ENCODE measurements at regions of chr20 and their contacts with region 1.

Region 1: GRCh38 chr20:35883778-35884540 is 70.3 kb downstream of the SCAND1 start:
- DNase-seq: no peak
- ATAC-seq: peak; percentile 97
- H3K4me3 ChIP-seq: no peak overlapping the region
- H3K27ac ChIP-seq: no peak overlapping the region
- H3K4me1 ChIP-seq: no peaks in the 10 kb centered on the region
- H3K27me3 ChIP-seq: no peaks in the 10 kb centered on the region
- CTCF ChIP-seq: peak; percentile 66 to 82 (median 77)
- EP300 ChIP-seq: no peak
- POLR2A ChIP-seq: no peak
- RAD21 ChIP-seq: peak; percentile 80

Region 2: GRCh38 chr20:35690265-35690664 is 193.7 kb before region 1 on chr20:
- CTCF ChIA-PET with region 1: interaction called, 3 read pairs
- POLR2A ChIA-PET with region 1: no interaction called
- RAD21 ChIA-PET with region 1: no interaction called
- SMC1A ChIA-PET with region 1: no interaction called
- in situ Hi-C with region 1: no loop called
- intact Hi-C with region 1: loop called (anchors 2 kb)
- DNase-seq: no peak
- ATAC-seq: no peak
- H3K4me3 ChIP-seq: no peak overlapping the region
- H3K27ac ChIP-seq: no peak overlapping the region
- H3K4me1 ChIP-seq: no peaks in the 10 kb centered on the region
- H3K27me3 ChIP-seq: no peaks in the 10 kb centered on the region
- CTCF ChIP-seq: no peak
- EP300 ChIP-seq: no peak
- POLR2A ChIP-seq: no peak
- RAD21 ChIP-seq: no peak

Region 3: GRCh38 chr20:35791821-35792220 is 92.1 kb before region 1 on chr20:
- CTCF ChIA-PET with region 1: no interaction called
- POLR2A ChIA-PET with region 1: no interaction called
- RAD21 ChIA-PET with region 1: no interaction called
- SMC1A ChIA-PET with region 1: no interaction called
- in situ Hi-C with region 1: no loop called
- intact Hi-C with region 1: no loop called
- DNase-seq: no peak
- ATAC-seq: no peak
- H3K4me3 ChIP-seq: no peak overlapping the region
- H3K27ac ChIP-seq: no peak overlapping the region
- H3K4me1 ChIP-seq: no peaks in the 10 kb centered on the region
- H3K27me3 ChIP-seq: no peaks in the 10 kb centered on the region
- CTCF ChIP-seq: no peak
- EP300 ChIP-seq: no peak
- POLR2A ChIP-seq: no peak
- RAD21 ChIP-seq: no peak